ENCODE measurements at regions of chr9 and their contacts with region 1.

Region 1: GRCh38 chr9:35646533-35647265 is 4.0 kb downstream of the SIT1 start:
- DNase-seq: peak; percentile 95
- ATAC-seq: peak; percentile 89
- H3K4me3 ChIP-seq: peak overlapping the region; percentile 76 to 90 (median 84)
- H3K4me3 Mint-ChIP-seq: peak overlapping the region; percentile 97
- H3K27ac ChIP-seq: peak overlapping the region; percentile 88 to 95
- H3K27ac Mint-ChIP-seq: peak overlapping the region; percentile 97
- H3K4me1 ChIP-seq: peaks cover 76 to 92% of the 10 kb centered on the region in 2 donors
- H3K4me1 Mint-ChIP-seq: peaks cover 81% of the 10 kb centered on the region
- H3K27me3 ChIP-seq: no peaks in the 10 kb centered on the region
- H3K27me3 Mint-ChIP-seq: no peaks in the 10 kb centered on the region
- CTCF ChIP-seq: peak; percentile 94

Region 2: DNA sequence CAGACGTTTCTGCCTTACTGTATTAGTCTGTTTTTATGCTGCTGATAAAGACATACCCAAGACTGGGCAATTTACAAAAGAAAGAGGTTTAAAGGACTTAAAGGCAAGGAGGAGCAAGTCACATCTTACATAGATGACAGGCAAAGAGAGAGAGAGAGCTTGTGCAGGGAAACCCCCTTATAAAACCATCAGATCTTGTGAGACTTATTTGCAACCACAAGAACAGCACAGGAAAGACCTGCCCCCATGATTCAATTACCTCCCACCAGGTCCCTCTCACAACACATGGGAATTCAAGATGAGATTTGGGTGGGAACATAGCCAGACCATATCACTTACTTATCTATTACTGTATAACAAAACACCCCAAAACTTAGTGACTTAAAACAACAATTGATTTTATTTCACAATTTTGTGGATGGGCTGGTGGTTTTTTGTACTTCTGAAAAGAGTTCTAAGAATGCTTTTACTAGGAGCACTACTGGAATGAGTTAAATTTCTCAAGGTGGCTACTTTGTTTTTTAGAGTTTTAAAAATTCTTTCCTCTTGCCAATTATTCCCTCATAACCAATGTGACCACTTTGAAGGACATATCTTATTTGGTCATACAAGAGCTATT is 146.5 kb before region 1 on chr9:
- CTCF ChIA-PET with region 1: no interaction called
- POLR2A ChIA-PET with region 1: no interaction called
- intact Hi-C with region 1: no loop called
- DNase-seq: no peak
- ATAC-seq: no peak
- H3K4me3 ChIP-seq: no peak overlapping the region
- H3K4me3 Mint-ChIP-seq: no peak overlapping the region
- H3K27ac ChIP-seq: no peak overlapping the region
- H3K27ac Mint-ChIP-seq: no peak overlapping the region
- H3K4me1 ChIP-seq: no peaks in the 10 kb centered on the region
- H3K4me1 Mint-ChIP-seq: peaks cover 2% of the 10 kb centered on the region
- H3K27me3 ChIP-seq: peaks cover 0 to 4% (median 0%) of the 10 kb centered on the region in 4 experiments
- H3K27me3 Mint-ChIP-seq: peaks cover 21% of the 10 kb centered on the region
- CTCF ChIP-seq: no peak

Region 3: DNA sequence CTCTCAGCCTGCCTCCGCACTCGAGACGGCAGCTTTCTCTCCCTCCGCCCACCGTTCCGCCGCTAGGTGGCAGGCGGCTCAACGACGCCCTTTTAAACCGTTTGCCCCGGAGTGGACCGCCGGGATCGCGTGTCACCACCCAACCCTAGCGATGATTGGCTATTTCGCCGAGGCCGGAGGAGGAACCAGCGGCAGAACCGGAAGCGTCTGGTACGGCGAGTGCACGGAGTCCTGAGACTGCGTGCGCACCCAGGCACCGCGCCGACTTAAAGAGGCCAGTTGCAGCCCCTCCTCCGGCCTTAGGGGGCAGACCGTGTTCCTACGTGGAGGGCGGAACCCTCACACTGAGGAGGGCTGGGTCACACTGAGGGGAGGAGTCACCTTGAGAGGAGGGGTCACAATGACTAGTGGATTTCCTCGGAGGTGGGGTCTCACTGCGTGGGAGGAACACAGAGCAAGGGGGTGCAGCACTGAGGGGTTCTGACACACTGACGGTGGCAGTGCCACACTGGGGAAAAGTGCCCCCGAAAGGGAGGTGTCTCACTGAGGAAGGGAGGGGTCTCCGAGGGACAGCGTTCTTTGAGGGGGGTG is 42.6 kb before region 1 on chr9:
- CTCF ChIA-PET with region 1: interaction called, 357 read pairs
- POLR2A ChIA-PET with region 1: interaction called, 22 read pairs
- intact Hi-C with region 1: loop called (anchors 1 kb)
- DNase-seq: peak; percentile 100
- ATAC-seq: peak; percentile 86
- H3K4me3 ChIP-seq: peak overlapping the region; percentile 71 to 84 (median 81)
- H3K4me3 Mint-ChIP-seq: peak overlapping the region; percentile 97
- H3K27ac ChIP-seq: peak overlapping the region; percentile 80 to 84
- H3K27ac Mint-ChIP-seq: peak overlapping the region; percentile 99
- H3K4me1 ChIP-seq: peaks cover 26 to 46% of the 10 kb centered on the region in 2 donors
- H3K4me1 Mint-ChIP-seq: peaks cover 36% of the 10 kb centered on the region
- H3K27me3 ChIP-seq: no peaks in the 10 kb centered on the region
- H3K27me3 Mint-ChIP-seq: no peaks in the 10 kb centered on the region
- CTCF ChIP-seq: peak; percentile 97

Region 4: DNA sequence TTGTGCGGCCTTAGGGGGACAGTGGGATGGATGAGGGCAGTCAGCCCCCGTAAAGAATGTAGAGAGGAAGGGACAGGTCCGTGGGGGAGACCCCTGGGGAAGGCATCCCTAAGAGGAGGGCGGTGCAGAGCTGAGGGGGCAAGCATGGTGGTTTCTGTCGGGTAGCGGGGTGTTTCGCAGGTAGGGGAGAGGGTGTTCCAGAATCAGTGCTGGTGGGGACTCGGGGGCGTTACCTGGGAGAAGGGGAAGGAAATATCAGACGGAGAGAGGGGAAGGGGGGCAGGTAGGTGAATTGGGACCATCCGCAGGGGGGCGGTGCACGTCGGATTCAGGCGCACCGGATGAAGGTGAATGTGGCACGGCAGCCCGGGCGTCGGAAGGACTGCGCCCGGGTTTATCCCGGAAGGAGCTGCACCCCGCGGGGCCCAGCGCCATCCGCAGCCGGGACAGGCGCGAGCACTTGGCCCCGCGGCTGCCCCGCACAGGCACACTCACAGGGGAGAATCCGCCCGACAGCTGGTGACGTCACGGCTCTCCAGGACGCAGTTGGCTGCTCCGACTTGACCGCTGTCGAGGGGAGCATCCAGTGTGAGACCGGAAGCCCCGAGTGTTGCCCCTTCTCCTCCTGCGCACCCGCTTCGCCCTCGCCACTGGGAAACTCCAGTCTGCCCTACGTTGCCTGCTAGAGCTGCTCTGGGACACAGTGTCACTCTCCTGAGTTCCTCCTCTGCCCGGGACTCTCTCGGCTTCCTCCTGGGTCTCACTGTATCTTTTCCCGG is 29.8 kb before region 1 on chr9:
- CTCF ChIA-PET with region 1: interaction called, 357 read pairs
- POLR2A ChIA-PET with region 1: interaction called, 114 read pairs
- intact Hi-C with region 1: loop called (anchors 1 kb)
- DNase-seq: peak; percentile 82
- ATAC-seq: peak; percentile 11
- H3K4me3 ChIP-seq: peak overlapping the region; percentile 80 to 91 (median 90)
- H3K4me3 Mint-ChIP-seq: peak overlapping the region; percentile 86
- H3K27ac ChIP-seq: peak overlapping the region; percentile 95 to 97
- H3K27ac Mint-ChIP-seq: peak overlapping the region; percentile 86
- H3K4me1 ChIP-seq: peaks cover 79 to 95% of the 10 kb centered on the region in 2 donors
- H3K4me1 Mint-ChIP-seq: peaks cover 94% of the 10 kb centered on the region
- H3K27me3 ChIP-seq: no peaks in the 10 kb centered on the region
- H3K27me3 Mint-ChIP-seq: no peaks in the 10 kb centered on the region
- CTCF ChIP-seq: peak; percentile 21

Region 5: DNA sequence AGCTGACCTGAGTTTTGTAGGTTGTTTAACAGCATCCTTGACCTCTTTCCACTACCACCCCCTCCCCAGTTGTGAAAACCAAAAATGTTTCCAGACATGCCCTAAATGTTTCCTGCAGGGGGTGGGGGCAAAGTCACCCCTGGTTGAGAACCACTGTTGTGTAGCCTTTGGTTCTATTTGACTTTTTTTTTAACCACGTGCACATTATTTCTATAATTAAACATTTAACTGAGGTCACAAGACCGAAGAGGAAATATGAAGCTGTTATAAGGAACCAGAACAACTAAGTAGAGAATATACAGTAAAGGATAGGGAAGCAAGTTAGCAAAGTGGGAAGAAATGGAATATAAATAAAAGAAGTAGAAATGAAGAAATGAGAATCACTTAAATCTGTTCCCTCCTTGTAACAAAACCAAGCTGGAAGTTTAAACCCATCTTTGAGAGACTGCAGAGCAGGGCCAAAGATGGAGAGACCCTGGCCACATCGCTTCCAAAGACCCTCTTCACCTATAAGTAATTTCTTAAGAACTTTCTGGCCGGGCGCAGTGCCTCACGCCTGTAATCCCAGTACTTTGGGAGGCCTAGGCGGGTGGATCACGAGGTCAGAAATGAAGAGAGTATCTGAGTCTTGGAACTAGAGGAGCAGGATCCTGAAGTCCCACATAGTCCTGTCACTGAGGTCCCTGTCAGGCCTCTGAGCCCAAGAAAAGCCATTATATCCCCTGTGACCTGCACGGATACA is 10.4 kb before region 1 on chr9:
- CTCF ChIA-PET with region 1: interaction called, 16 read pairs
- POLR2A ChIA-PET with region 1: interaction called, 8 read pairs
- intact Hi-C with region 1: loop called (anchors 1 kb)
- DNase-seq: peak; percentile 77
- ATAC-seq: peak; percentile 76
- H3K4me3 ChIP-seq: peak overlapping the region in 2 of 5 experiments; percentile 5 to 28
- H3K4me3 Mint-ChIP-seq: peak overlapping the region; percentile 68
- H3K27ac ChIP-seq: peak overlapping the region; percentile 88 to 95
- H3K27ac Mint-ChIP-seq: peak overlapping the region; percentile 91
- H3K4me1 ChIP-seq: peaks cover 73 to 74% of the 10 kb centered on the region in 2 donors
- H3K4me1 Mint-ChIP-seq: peaks cover 72% of the 10 kb centered on the region
- H3K27me3 ChIP-seq: no peaks in the 10 kb centered on the region
- H3K27me3 Mint-ChIP-seq: no peaks in the 10 kb centered on the region
- CTCF ChIP-seq: no peak

Region 6: GRCh38 chr9:35705836-35706430 is 59.2 kb after region 1 on chr9:
- CTCF ChIA-PET with region 1: no interaction called
- POLR2A ChIA-PET with region 1: no interaction called
- intact Hi-C with region 1: no loop called
- DNase-seq: no peak
- ATAC-seq: no peak
- H3K4me3 ChIP-seq: no peak overlapping the region
- H3K4me3 Mint-ChIP-seq: no peak overlapping the region
- H3K27ac ChIP-seq: no peak overlapping the region
- H3K27ac Mint-ChIP-seq: no peak overlapping the region
- H3K4me1 ChIP-seq: no peaks in the 10 kb centered on the region
- H3K4me1 Mint-ChIP-seq: no peaks in the 10 kb centered on the region
- H3K27me3 ChIP-seq: no peaks in the 10 kb centered on the region
- H3K27me3 Mint-ChIP-seq: no peaks in the 10 kb centered on the region
- CTCF ChIP-seq: no peak

Region 7: GRCh38 chr9:35716230-35716629 is 69.5 kb after region 1 on chr9:
- CTCF ChIA-PET with region 1: interaction called, 13 read pairs
- POLR2A ChIA-PET with region 1: interaction called, 8 read pairs
- intact Hi-C with region 1: loop called (anchors 2 kb)
- DNase-seq: no peak
- ATAC-seq: no peak
- H3K4me3 ChIP-seq: no peak overlapping the region
- H3K4me3 Mint-ChIP-seq: no peak overlapping the region
- H3K27ac ChIP-seq: no peak overlapping the region
- H3K27ac Mint-ChIP-seq: peak overlapping the region; percentile 65
- H3K4me1 ChIP-seq: peaks cover 16 to 24% of the 10 kb centered on the region in 2 donors
- H3K4me1 Mint-ChIP-seq: peaks cover 26% of the 10 kb centered on the region
- H3K27me3 ChIP-seq: no peaks in the 10 kb centered on the region
- H3K27me3 Mint-ChIP-seq: no peaks in the 10 kb centered on the region
- CTCF ChIP-seq: no peak